CD4-positive, alpha-beta T cell (primary cell): ENCODE measurements at regions of chr10 and their contacts with region 1.

Region 1: DNA sequence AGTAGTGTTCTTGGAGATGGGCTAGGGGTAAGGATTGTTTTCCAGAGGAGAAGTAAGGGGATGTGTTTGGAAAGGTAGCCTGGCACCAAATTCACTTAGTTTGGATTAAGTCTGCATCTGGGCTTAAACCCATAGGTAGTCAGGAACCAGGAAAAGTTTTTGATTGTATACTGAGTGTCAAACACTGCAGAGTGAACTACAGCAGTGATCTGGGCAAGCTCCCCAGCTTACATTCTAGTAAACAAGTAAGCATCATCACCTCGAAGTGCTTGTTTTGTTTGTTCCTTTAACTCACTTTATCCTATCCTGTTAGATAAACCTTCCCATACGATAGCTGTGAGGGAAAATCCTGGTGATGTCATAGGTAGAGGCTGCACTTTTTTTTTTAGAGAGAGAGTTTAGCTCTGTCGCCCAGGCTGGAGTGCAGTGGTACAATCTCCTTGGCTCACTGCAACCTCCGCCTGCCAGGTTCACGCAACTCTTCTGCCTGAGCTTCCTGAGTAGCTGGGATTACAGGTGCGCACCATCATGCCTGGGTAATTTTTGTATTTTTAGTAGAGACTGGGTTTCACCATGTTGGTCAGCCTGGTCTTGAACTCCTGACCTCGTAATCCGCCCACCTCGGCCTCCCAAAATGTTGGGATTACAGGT is 2.4 kb downstream of the RPS24 start:
- DNase-seq: no peak
- ATAC-seq: no peak
- H3K4me3 ChIP-seq: no peak overlapping the region
- H3K4me3 Mint-ChIP-seq: peak overlapping the region; percentile 96
- H3K27ac ChIP-seq: peak overlapping the region in 1 of 2 donors; percentile 20
- H3K27ac Mint-ChIP-seq: peak overlapping the region; percentile 87
- H3K4me1 ChIP-seq: peaks cover 50% of the 10 kb centered on the region
- H3K4me1 Mint-ChIP-seq: peaks cover 70% of the 10 kb centered on the region
- H3K27me3 ChIP-seq: no peaks in the 10 kb centered on the region
- H3K27me3 Mint-ChIP-seq: no peaks in the 10 kb centered on the region
- CTCF ChIP-seq: no peak

Region 2: GRCh38 chr10:78047314-78047891 is 11.3 kb after region 1 on chr10:
- CTCF ChIA-PET with region 1: interaction called, 15 read pairs
- POLR2A ChIA-PET with region 1: interaction called, 11 read pairs
- intact Hi-C with region 1: no loop called
- DNase-seq: peak; percentile 70 to 87 (median 78)
- ATAC-seq: peak; percentile 94
- H3K4me3 ChIP-seq: no peak overlapping the region
- H3K4me3 Mint-ChIP-seq: no peak overlapping the region
- H3K27ac ChIP-seq: no peak overlapping the region
- H3K27ac Mint-ChIP-seq: no peak overlapping the region
- H3K4me1 ChIP-seq: peaks cover 14% of the 10 kb centered on the region
- H3K4me1 Mint-ChIP-seq: peaks cover 19% of the 10 kb centered on the region
- H3K27me3 ChIP-seq: no peaks in the 10 kb centered on the region
- H3K27me3 Mint-ChIP-seq: no peaks in the 10 kb centered on the region
- CTCF ChIP-seq: peak; percentile 86